HEK293 (cell line): ENCODE measurements at regions of chr19 and their contacts with region 1.

Region 1: DNA sequence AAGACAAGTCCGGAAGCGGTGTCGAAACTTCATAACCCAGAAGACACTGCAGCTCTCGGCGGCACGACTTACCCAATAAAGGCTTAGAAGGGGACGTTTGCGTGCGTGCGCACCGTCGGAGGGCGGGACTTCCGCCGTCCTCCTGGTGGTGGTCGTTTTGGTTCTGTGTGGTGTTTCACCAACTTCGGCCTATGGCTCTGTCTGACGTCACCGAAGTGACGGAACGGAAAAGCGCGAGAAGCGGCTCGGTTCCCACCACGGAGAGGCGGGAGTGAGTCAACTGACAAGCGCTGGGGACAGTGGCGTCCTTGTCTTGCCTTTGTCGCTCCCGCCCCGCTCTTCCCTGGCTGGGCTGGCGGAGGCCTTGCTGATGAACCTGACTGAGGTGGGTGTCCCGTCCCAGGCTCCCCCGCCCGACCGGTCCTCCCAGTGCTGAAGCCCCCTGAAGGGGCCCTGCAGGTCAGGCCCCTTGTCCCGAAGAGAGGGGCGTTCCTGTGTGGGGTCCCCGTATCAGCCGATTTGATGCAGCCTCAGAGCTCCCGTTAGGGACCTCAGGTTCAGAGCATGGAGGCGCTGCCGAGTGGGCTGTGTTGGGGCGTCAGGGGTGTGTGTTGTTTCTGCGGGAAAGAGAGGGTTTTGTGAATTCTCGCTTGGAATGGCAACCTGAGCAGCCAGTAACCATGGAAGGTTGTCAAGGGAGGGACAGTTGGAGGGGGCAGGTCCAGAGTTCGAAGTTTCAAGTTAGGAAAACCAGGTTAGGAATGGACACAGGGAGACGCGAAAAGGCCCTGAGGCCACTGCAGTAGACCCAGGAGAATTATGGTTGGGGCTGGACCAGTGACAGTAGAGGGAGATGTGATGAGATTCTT is at the start of gene ZNF548:
- H3K4me3 ChIP-seq: peak within 1 kb of the TSS; percentile 79
- H3K27ac ChIP-seq: peak within 1 kb of the TSS; percentile 89
- H3K4me1 ChIP-seq: peaks cover 6% of the 10 kb centered on the region
- CTCF ChIP-seq: peak; percentile 92

Region 2: DNA sequence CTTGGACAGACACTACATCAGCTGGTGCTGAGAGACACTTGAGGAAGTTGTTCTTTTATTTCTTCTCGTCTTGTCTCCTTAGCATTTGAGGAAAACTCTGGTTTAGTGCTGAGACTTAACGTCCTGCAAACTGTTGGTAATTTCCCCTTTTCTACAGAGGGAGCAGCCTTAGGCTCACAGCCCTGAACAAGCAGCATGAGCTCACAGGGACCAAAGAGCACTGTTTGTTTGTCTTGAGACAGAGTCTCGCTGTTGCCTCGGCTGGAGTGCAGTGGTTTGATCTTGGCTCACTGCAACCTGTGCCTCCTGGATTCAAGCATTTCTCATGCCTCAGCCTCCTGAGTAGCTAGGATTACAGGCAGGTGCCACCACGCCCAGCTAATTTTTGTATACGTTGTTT is 144.0 kb before region 1 on chr19:
- CTCF ChIA-PET with region 1: no interaction called
- POLR2A ChIA-PET with region 1: no interaction called
- H3K4me3 ChIP-seq: no peak overlapping the region
- H3K27ac ChIP-seq: no peak overlapping the region
- H3K4me1 ChIP-seq: no peaks in the 10 kb centered on the region; the same call in 1 of the 2 replicates
- CTCF ChIP-seq: no peak

Region 3: DNA sequence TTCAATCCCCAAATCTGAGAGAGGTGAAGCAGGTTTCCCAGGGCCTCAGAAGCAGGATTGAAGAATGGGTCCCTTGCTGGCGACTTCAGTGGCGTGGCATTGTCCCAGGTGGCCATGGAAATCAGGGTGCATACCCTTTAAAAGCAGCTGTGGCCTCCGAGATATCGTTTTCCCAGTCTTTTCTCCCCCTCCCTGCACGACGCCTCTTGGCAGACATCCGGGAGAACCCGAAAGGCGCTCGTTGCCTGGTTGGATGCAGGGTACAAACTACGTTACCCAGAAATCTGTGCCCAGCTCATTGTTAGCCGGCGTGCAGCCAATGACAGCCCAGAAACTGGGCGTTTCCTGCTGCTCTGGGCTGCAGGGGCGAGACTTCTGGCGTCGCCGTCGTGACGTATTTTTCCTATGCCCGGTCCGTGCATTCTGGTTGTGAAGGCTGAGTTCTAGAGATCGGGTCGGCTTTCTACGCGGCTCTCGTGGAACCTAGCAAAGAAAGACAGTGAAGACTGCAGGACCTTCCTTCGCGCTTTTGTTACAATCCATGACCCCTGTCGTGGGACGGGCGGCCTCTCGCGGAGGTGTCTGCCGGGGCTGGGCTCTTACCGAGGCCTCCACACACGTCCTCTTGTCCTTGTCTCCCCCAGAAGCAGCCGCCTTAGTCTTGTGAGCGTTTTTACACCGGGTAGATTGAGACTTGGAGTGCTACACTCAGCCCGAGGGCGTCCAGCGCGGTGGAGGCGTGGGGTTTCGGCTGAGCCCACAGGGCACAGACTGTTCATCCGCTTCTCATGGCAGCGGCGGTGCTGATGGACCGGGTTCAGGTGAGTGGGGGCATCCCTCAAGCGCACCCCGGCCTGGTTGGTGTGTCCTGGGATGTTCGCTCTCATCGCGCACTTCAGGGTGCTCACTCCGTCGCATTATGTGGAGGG is 38.8 kb before region 1 on chr19 and contains the start of gene ZNF304:
- CTCF ChIA-PET with region 1: no interaction called
- POLR2A ChIA-PET with region 1: interaction called, 19 read pairs
- H3K4me3 ChIP-seq: peak within 1 kb of the TSS; percentile 81
- H3K27ac ChIP-seq: peak within 1 kb of the TSS; percentile 34
- H3K4me1 ChIP-seq: peaks cover 6% of the 10 kb centered on the region; the same call in 1 of the 2 replicates
- CTCF ChIP-seq: no peak

Region 4: GRCh38 chr19:57362997-57363705 is 26.8 kb before region 1 on chr19 and contains the starts of genes TRAPPC2B and ZNF547:
- CTCF ChIA-PET with region 1: no interaction called
- POLR2A ChIA-PET with region 1: interaction called, 22 read pairs
- H3K4me3 ChIP-seq: peak within 1 kb of the TSS; percentile 86
- H3K27ac ChIP-seq: peak within 1 kb of the TSS; percentile 54
- H3K4me1 ChIP-seq: peaks cover 4% of the 10 kb centered on the region; the same call in 1 of the 2 replicates
- CTCF ChIP-seq: no peak

Region 5: DNA sequence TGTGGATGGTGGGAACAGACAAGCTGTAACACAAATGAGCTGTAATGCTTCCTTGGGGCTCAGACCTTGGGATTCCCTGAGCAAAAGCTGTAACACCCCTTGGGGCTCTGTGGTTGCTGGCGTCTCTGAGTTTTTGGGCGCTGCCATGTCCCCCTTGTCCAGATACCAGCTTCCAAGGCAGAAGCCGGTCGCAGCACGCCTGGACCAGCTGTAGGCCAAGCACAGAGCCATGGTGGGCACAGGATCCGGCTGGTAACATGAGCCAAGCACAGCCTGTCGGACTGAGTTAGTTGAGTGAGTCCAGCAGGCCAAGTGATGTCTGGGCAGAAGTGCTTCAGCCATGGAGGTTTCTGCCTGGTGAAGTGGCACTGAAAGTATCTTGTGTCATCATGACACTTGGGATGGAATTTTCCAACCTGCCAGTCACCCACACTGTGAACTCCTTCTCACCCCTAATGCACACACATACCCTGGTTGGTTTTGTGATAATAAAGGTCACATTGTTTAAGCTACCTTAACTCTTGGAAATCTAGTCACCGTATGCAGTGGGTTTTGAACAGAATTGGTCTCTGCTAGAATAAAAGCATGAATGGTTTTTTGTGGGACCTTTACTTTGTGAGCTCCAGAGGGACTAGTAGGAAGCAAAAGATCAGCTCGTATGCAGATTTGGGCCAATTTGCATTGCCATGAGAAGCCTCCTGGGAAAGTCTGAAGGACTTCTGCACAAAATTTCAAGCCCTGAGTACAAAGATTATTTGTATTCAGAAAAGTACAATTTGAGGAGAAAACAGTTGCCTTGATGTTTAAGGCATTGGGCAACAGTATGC is 14.0 kb after region 1 on chr19:
- CTCF ChIA-PET with region 1: interaction called, 3 read pairs
- POLR2A ChIA-PET with region 1: interaction called, 10 read pairs
- H3K4me3 ChIP-seq: no peak overlapping the region
- H3K27ac ChIP-seq: no peak overlapping the region
- H3K4me1 ChIP-seq: no peaks in the 10 kb centered on the region
- CTCF ChIP-seq: no peak

Region 6: GRCh38 chr19:57583521-57584416 is 193.8 kb after region 1 on chr19 and contains the start of gene ZIK1:
- CTCF ChIA-PET with region 1: no interaction called
- POLR2A ChIA-PET with region 1: no interaction called
- H3K4me3 ChIP-seq: peak within 1 kb of the TSS; percentile 69
- H3K27ac ChIP-seq: peak within 1 kb of the TSS; percentile 49; the same call in 1 of the 2 replicates
- H3K4me1 ChIP-seq: 0 out of 2 replicates have a peak, but pooled peaks cover 2% of the 10 kb centered on the region
- CTCF ChIP-seq: no peak; the same call in 1 of the 2 replicates